ENCODE measurements at regions of chr2 and their contacts with region 1.

Region 1: DNA sequence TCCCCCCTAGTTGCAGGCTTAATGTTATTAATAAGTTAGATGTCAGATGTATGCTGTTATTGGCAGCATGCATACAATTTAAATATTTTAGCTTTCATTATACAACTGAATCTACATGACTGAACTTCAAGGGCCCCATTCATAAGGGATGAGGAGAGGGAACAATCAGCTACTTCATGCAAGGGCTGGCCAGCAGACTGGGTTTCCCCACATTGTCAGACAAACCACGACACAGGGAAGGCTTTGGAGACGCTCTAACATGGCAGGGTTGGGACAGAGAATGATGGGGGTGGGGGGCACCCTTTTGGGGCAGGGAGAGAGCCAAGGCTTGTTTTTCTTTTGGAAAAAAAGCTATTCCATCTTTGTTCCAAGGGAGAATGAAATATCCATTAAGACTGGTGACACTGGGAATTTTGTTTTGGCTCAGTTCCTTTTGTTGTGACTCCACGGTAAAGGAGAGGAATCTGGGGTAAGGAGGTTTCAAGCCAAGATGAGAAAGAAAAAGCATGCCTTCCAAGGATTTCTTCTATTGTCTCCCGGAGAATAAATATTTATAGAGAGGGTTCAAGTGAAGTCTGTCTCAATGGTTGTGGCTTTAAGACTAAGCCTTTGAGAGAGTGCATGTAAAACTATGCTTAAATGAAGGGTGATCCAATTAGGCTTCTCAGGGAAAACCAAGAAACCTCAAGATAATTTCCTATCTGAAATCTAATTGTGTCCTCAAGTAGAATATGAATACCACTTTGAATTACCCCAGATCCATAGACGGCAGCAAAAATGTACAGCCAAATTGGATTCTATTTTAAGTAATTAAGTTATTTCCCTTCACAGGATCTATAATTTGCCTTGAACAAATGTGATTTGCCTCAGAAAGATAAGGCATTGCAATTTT is 5.4 kb downstream of the CXCR4 start:
- DNase-seq: no peak
- ATAC-seq: peak; percentile 3; the same call in 2 of the 3 replicates
- H3K4me3 ChIP-seq: no peak overlapping the region
- H3K27ac ChIP-seq: no peak overlapping the region
- H3K4me1 ChIP-seq: peaks cover 5% of the 10 kb centered on the region; the same call in 1 of the 2 replicates
- H3K27me3 ChIP-seq: 0 out of 4 replicates have a peak, but pooled peaks cover 0 to 3% of the 10 kb centered on the region in 2 experiments
- CTCF ChIP-seq: no peak
- EP300 ChIP-seq: no peak
- POLR2A ChIP-seq: no peak
- RAD21 ChIP-seq: no peak

Region 2: GRCh38 chr2:136065384-136065783 is 47.2 kb before region 1 on chr2:
- CTCF ChIA-PET with region 1: interaction called, 103 read pairs
- POLR2A ChIA-PET with region 1: interaction called, 21 read pairs
- RAD21 ChIA-PET with region 1: interaction called, 221 read pairs
- SMC1A ChIA-PET with region 1: interaction called, 400 read pairs
- in situ Hi-C with region 1: no loop called
- intact Hi-C with region 1: no loop called
- DNase-seq: no peak
- ATAC-seq: peak; percentile 66
- H3K4me3 ChIP-seq: no peak overlapping the region
- H3K27ac ChIP-seq: no peak overlapping the region
- H3K4me1 ChIP-seq: peaks cover 12% of the 10 kb centered on the region
- H3K27me3 ChIP-seq: peaks cover 0 to 3% of the 10 kb centered on the region in 2 experiments; a peak in 1 of 4 replicates
- CTCF ChIP-seq: no peak
- EP300 ChIP-seq: no peak
- POLR2A ChIP-seq: no peak
- RAD21 ChIP-seq: no peak